ENCODE measurements at regions of chr5 and their contacts with region 1.

Region 1: GRCh38 chr5:67246108-67246507 is 49.5 kb upstream of the CD180 start:
- DNase-seq: no peak
- H3K4me3 Mint-ChIP-seq: no peak overlapping the region
- H3K27ac Mint-ChIP-seq: no peak overlapping the region
- H3K4me1 Mint-ChIP-seq: peaks cover 10% of the 10 kb centered on the region
- H3K27me3 Mint-ChIP-seq: peaks cover 1% of the 10 kb centered on the region

Region 2: GRCh38 chr5:66197771-66198405 is 1048.2 kb before region 1 on chr5:
- intact Hi-C with region 1: no loop called
- DNase-seq: no peak
- H3K4me3 Mint-ChIP-seq: no peak overlapping the region
- H3K27ac Mint-ChIP-seq: no peak overlapping the region
- H3K4me1 Mint-ChIP-seq: no peaks in the 10 kb centered on the region
- H3K27me3 Mint-ChIP-seq: peaks cover 1% of the 10 kb centered on the region

Region 3: DNA sequence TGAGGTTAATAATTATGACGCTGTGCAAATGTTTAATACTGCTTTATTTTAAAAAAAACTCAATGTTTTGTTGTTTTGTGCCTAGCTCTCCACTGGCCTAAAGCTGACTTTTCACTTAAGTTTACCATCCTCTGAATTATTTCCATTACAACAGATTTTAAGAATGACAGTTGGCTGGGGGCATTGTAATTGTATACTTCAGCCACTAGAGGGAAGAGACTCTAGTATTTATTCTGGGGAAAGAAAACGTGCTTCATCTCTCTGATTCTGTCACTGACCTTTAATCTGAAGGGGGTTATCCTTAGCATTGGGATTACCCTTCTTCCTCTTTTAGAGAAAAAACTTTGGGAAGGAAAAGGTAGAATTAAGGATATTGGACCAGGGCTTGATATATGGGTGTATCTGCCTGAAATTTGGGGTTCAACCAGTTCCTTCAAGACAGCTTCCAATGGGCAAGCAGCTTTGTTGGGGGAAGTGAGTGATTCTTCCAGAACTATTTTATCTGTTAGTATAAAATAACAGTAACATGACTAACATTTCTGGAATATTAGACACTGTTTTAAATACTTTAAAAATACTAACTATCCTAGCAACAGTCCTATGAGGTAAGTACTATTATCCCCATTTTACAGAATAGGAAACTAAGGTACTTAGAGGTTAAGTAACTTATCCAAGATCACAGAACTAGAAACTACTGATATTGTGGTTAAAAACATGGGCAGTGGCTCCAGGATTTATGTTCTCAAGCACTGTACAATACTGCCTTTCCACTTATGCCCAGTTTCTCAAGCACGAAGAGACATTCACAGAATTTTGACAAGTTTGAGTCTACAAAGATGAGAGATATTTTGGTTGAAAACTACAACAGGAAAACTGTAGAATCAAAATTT is 257.9 kb before region 1 on chr5:
- intact Hi-C with region 1: loop called (anchors 1 kb)
- DNase-seq: no peak
- H3K4me3 Mint-ChIP-seq: no peak overlapping the region
- H3K27ac Mint-ChIP-seq: no peak overlapping the region
- H3K4me1 Mint-ChIP-seq: peaks cover 8% of the 10 kb centered on the region
- H3K27me3 Mint-ChIP-seq: peaks cover 19% of the 10 kb centered on the region

Region 4: GRCh38 chr5:68252673-68253623 is 1006.8 kb after region 1 on chr5:
- intact Hi-C with region 1: loop called (anchors 5 kb)
- DNase-seq: no peak
- H3K4me3 Mint-ChIP-seq: no peak overlapping the region
- H3K27ac Mint-ChIP-seq: no peak overlapping the region
- H3K4me1 Mint-ChIP-seq: peaks cover 85% of the 10 kb centered on the region
- H3K27me3 Mint-ChIP-seq: no peaks in the 10 kb centered on the region

Measured in activated T-helper 2 cell treated with anti-CD3 and anti-CD28 coated beads, Interferon-gamma antibody, Interleukin-2, Interleukin-4, amounts not matched to agents 10 μg/mL and 5 μg/mL and 100 μg/mL, durations not matched to agents 14 hours and 24 hours and 36 hours (primary cell).